A549 (cell line): ENCODE measurements at regions of chr4 and their contacts with region 1.

Region 1: GRCh38 chr4:3106339-3107186 is 32.1 kb downstream of the HTT start:
- DNase-seq: peak; percentile 76 to 90
- ATAC-seq: peak; percentile 100
- H3K4me3 ChIP-seq: no peak overlapping the region
- H3K27ac ChIP-seq: no peak overlapping the region
- H3K4me1 ChIP-seq: peaks cover 4% of the 10 kb centered on the region; the same call in 2 of the 3 replicates
- CTCF ChIP-seq: peak; percentile 75
- EP300 ChIP-seq: no peak
- POLR2A ChIP-seq: no peak
- RAD21 ChIP-seq: peak; percentile 73 to 77

Region 2: DNA sequence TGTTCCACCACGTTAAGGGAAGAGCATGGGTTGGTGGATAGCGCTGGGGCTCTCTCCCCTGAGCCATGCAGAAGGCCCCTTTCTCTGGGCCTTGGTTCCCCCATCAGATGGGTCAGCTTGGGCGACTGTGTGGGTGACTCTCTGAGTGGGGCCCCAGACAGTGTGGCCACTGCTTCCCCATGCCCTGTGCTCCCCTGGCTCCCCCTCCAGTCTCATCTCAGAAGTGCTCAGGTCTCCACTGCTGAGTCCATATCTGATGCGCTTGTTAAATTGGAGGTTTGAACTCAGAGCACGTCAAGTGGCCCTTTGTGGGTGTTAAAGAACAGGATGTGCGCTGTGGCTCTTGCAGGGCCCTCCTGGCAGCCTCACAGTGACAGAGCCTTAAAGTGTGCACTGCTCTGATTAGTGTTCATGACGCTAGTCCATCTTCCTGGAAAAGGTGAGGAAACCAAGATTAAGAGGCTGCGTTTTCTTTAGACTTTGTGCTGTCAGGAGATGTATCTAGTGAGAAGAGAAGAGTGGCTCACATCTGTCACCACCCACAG is 1157.6 kb before region 1 on chr4:
- CTCF ChIA-PET with region 1: no interaction called
- POLR2A ChIA-PET with region 1: no interaction called
- DNase-seq: no peak
- ATAC-seq: peak; percentile 54 to 56; a peak in 3 of 6 replicates
- H3K4me3 ChIP-seq: no peak overlapping the region
- H3K27ac ChIP-seq: no peak overlapping the region
- H3K4me1 ChIP-seq: no peaks in the 10 kb centered on the region
- CTCF ChIP-seq: no peak
- EP300 ChIP-seq: no peak
- POLR2A ChIP-seq: no peak
- RAD21 ChIP-seq: no peak

Region 3: DNA sequence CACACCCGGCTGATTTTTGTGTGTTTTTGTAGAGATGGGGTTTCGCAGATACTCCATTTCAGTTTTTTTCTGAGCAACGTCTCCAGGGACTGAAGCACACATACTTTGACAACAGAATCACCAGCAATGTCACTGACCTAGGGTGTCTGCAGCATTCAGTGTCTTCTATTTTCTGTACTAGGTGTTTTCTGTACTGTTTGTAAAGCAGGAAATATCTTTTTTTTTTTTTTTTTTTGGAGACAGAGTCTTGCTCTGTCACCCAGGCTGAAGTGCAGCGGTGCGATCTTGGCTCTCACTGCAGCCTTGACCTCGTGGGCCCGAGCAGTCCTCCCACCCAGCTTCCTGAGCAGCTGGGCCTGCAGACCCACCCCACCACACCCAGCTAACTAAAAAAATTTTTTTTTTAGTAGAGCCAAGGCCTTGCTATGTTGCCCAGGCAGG is 254.1 kb before region 1 on chr4:
- CTCF ChIA-PET with region 1: no interaction called
- POLR2A ChIA-PET with region 1: no interaction called
- DNase-seq: no peak
- ATAC-seq: no peak
- H3K4me3 ChIP-seq: no peak overlapping the region
- H3K27ac ChIP-seq: no peak overlapping the region
- H3K4me1 ChIP-seq: peaks cover 4% of the 10 kb centered on the region; the same call in 2 of the 3 replicates
- CTCF ChIP-seq: no peak
- EP300 ChIP-seq: no peak
- POLR2A ChIP-seq: no peak
- RAD21 ChIP-seq: no peak

Region 4: GRCh38 chr4:2878346-2878745 is 228.2 kb before region 1 on chr4:
- CTCF ChIA-PET with region 1: no interaction called
- POLR2A ChIA-PET with region 1: no interaction called
- DNase-seq: no peak
- ATAC-seq: no peak
- H3K4me3 ChIP-seq: no peak overlapping the region
- H3K27ac ChIP-seq: no peak overlapping the region
- H3K4me1 ChIP-seq: no peaks in the 10 kb centered on the region
- CTCF ChIP-seq: no peak
- EP300 ChIP-seq: no peak
- POLR2A ChIP-seq: no peak
- RAD21 ChIP-seq: no peak

Region 5: DNA sequence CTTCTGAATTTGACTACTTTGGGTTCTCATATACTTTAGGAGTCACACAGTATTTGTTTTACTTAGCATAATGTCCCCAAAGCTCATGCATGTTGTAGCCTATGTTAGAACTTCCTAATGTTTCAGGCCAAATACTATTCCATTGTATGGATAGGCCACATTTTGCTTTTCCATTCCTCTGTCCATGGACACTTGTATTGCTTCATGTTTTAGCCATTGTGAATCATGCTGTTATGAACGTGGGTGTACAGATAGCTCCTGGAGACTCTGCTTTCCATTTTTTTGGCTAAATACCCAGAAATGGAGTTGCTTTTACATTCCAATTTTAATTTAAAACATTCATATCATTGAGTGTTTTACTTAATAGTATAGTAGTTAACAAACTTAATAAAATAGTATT is 22.4 kb after region 1 on chr4:
- CTCF ChIA-PET with region 1: interaction called, 22 read pairs
- POLR2A ChIA-PET with region 1: no interaction called
- DNase-seq: no peak
- ATAC-seq: no peak
- H3K4me3 ChIP-seq: no peak overlapping the region
- H3K27ac ChIP-seq: no peak overlapping the region
- H3K4me1 ChIP-seq: no peaks in the 10 kb centered on the region
- CTCF ChIP-seq: no peak
- EP300 ChIP-seq: no peak
- POLR2A ChIP-seq: no peak
- RAD21 ChIP-seq: no peak

Region 6: GRCh38 chr4:3136453-3136852 is 29.9 kb after region 1 on chr4:
- CTCF ChIA-PET with region 1: interaction called, 22 read pairs
- POLR2A ChIA-PET with region 1: no interaction called
- DNase-seq: no peak
- ATAC-seq: no peak
- H3K4me3 ChIP-seq: no peak overlapping the region
- H3K27ac ChIP-seq: no peak overlapping the region
- H3K4me1 ChIP-seq: no peaks in the 10 kb centered on the region
- CTCF ChIP-seq: 0 out of 3 replicates have a peak, but pooled peaks have one; percentile 13
- EP300 ChIP-seq: no peak
- POLR2A ChIP-seq: no peak
- RAD21 ChIP-seq: 0 out of 5 replicates have a peak, but pooled peaks of 1 of the 2 experiments have one; percentile 14

Region 7: GRCh38 chr4:3514806-3515460 is 408.4 kb after region 1 on chr4:
- CTCF ChIA-PET with region 1: interaction called, 11 read pairs
- POLR2A ChIA-PET with region 1: no interaction called
- DNase-seq: peak in 1 of 2 experiments; percentile 20
- ATAC-seq: peak; percentile 68 to 78; a peak in 5 of 6 replicates
- H3K4me3 ChIP-seq: no peak overlapping the region
- H3K27ac ChIP-seq: no peak overlapping the region
- H3K4me1 ChIP-seq: no peaks in the 10 kb centered on the region
- CTCF ChIP-seq: peak; percentile 11; the same call in 1 of the 3 replicates
- EP300 ChIP-seq: no peak
- POLR2A ChIP-seq: no peak
- RAD21 ChIP-seq: no peak